ENCODE measurements at regions of chr11 and their contacts with region 1.

Region 1: GRCh38 chr11:72091005-72091691 is 10.5 kb downstream of the LRRC51 start:
- DNase-seq: peak; percentile 88 to 91
- H3K4me3 ChIP-seq: no peak overlapping the region
- H3K4me3 Mint-ChIP-seq: no peak overlapping the region
- H3K27ac Mint-ChIP-seq: no peak overlapping the region
- H3K4me1 ChIP-seq: peaks cover 6% of the 10 kb centered on the region
- H3K4me1 Mint-ChIP-seq: peaks cover 14% of the 10 kb centered on the region
- H3K27me3 ChIP-seq: no peaks in the 10 kb centered on the region
- H3K27me3 Mint-ChIP-seq: no peaks in the 10 kb centered on the region
- CTCF ChIP-seq: peak; percentile 97 to 99

Region 2: GRCh38 chr11:72040726-72041441 is 50.3 kb before region 1 on chr11:
- CTCF ChIA-PET with region 1: interaction called, 17 read pairs
- POLR2A ChIA-PET with region 1: no interaction called
- intact Hi-C with region 1: no loop called
- DNase-seq: peak; percentile 37 to 56
- H3K4me3 ChIP-seq: peak overlapping the region; percentile 16
- H3K4me3 Mint-ChIP-seq: no peak overlapping the region
- H3K27ac Mint-ChIP-seq: no peak overlapping the region
- H3K4me1 ChIP-seq: peaks cover 31% of the 10 kb centered on the region
- H3K4me1 Mint-ChIP-seq: peaks cover 12% of the 10 kb centered on the region
- H3K27me3 ChIP-seq: no peaks in the 10 kb centered on the region
- H3K27me3 Mint-ChIP-seq: no peaks in the 10 kb centered on the region
- CTCF ChIP-seq: no peak

Measured in Caco-2 (cell line).